PC-9 (cell line): ENCODE measurements at regions of chr10 and their contacts with region 1.

Region 1: DNA sequence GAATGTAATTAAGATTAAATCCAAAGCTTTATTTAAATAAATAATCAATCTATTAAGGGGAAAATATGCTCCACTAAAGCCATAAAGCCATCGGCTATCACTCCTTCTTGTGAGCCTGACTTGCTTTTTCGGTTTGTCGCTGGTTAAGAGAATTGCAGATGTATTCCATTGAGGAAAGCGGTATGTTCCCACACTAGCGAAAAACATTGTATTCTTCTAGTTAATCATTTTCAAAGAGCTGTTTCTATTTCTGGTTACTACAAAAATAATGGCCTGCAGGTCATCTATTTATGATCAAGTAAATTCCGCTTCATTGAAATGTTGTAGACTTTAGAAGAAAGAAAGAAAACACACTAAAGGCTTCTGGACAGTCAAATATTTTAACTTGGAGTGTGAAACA is 173.4 kb downstream of the CACNB2 start:
- DNase-seq: no peak
- H3K4me3 ChIP-seq: no peak overlapping the region
- H3K27ac ChIP-seq: no peak overlapping the region
- H3K4me1 ChIP-seq: no peaks in the 10 kb centered on the region
- H3K27me3 ChIP-seq: no peaks in the 10 kb centered on the region
- CTCF ChIP-seq: no peak

Region 2: DNA sequence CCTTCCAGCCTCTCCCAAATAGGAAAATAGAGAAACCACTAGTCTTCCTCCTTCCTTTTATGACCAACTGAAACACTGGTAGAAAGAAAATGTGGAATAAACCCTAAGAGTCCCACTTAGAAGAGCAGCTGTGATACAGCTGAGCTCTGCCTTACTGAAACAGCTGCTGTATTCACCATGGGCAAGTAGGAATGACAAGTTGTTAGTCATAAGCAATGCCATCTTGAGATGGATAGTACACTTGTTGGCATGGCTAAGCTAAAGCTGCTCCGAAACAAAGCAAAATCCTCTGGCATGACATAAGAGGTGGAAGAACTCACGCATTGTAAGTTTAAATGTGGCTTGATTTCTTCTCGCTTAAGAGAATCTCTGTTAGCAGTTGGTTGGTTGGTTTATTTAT is 609.9 kb before region 1 on chr10:
- CTCF ChIA-PET with region 1: interaction called, 11 read pairs
- POLR2A ChIA-PET with region 1: no interaction called
- intact Hi-C with region 1: no loop called
- DNase-seq: no peak
- H3K4me3 ChIP-seq: no peak overlapping the region
- H3K27ac ChIP-seq: no peak overlapping the region
- H3K4me1 ChIP-seq: no peaks in the 10 kb centered on the region
- H3K27me3 ChIP-seq: no peaks in the 10 kb centered on the region
- CTCF ChIP-seq: no peak